IMR-90 (cell line): ENCODE measurements at regions of chr11 and their contacts with region 1.

Region 1: GRCh38 chr11:58394195-58394594 is 12.5 kb downstream of the OR5B3 start:
- DNase-seq: peak; percentile 82
- ATAC-seq: peak; percentile 30
- H3K4me3 ChIP-seq: no peak overlapping the region
- H3K27ac ChIP-seq: no peak overlapping the region; the same call in 1 of the 2 replicates
- H3K4me1 ChIP-seq: peaks cover 13% of the 10 kb centered on the region; the same call in 1 of the 2 replicates
- H3K27me3 ChIP-seq: no peaks in the 10 kb centered on the region
- CTCF ChIP-seq: no peak
- POLR2A ChIP-seq: no peak
- RAD21 ChIP-seq: no peak

Region 2: DNA sequence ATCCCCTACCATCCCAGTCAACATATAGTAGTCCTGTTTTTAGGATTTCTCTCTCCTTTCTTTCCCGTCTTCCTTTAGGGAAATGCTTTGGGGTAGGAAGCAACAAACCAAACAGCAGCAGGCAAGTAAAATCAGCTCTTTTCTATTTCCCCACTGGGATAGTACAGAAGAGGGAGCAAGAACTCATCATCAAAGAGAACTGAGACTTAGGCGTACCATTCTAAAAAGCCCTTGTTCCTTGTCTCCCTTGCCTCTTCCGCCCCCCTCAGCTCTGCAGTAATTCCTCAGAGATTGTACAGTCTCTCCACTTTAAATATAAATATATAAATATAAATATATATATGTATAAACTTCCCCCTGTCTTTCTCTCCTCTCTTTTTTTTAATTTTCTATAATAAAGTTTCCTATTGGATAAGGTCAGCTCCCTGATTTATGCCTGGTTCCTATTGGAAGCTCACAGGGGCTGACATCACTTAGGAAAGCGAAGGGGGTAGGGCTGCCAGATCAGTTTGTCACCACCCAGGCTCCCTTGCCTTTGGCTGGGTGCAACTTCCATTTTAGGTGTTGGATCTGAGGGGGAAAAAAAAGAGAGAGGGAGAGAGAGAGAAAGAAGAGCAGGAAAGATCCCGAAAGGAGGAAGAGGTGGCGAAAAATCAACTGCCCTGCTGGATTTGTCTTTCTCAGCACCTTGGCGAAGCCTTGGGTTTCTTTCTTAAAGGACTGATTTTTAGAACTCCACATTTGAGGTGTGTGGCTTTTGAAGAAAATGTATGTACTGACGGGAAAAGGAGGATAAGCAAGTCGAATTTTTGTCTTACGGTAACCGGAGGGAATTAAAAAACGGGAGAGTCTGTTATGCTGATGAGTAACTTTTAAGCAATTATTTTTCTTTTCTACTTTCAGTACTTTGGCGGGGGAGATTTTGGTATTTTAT is 632.6 kb before region 1 on chr11 and contains the start of gene CTNND1:
- CTCF ChIA-PET with region 1: no interaction called
- POLR2A ChIA-PET with region 1: no interaction called
- dilution Hi-C with region 1: no loop called
- in situ Hi-C with region 1: no loop called
- intact Hi-C with region 1: loop called (anchors 5 kb)
- DNase-seq: peak; percentile 98
- ATAC-seq: peak; percentile 96
- H3K4me3 ChIP-seq: peak within 1 kb of the TSS; percentile 99
- H3K27ac ChIP-seq: peak within 1 kb of the TSS; percentile 100
- H3K4me1 ChIP-seq: peaks cover 8% of the 10 kb centered on the region
- H3K27me3 ChIP-seq: no peaks in the 10 kb centered on the region
- CTCF ChIP-seq: no peak
- POLR2A ChIP-seq: peak; percentile 84; the same call in 1 of the 2 replicates
- RAD21 ChIP-seq: no peak
- total RNA-seq, gene CTNND1: 193 and 229 TPM in 2 replicates

Region 3: DNA sequence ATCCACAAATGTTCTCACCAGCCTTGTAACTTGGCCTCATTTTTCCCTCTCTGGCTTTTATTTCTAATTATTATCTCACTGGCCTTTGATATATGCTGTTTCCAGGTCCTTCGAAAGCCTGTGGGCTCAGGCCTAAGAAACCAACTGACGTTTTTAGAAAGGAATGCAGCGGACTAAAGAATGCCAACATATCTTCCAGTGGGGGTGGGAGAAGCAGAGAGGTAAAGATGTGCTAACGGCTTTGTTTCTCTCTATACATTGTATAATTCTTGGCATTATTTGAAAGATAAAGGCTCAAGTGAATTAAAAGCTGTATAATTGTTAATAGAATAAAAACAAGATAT is 335.2 kb before region 1 on chr11:
- CTCF ChIA-PET with region 1: no interaction called
- POLR2A ChIA-PET with region 1: no interaction called
- dilution Hi-C with region 1: no loop called
- in situ Hi-C with region 1: no loop called
- intact Hi-C with region 1: loop called (anchors 10 kb)
- DNase-seq: peak; percentile 92
- ATAC-seq: peak; percentile 81
- H3K4me3 ChIP-seq: no peak overlapping the region
- H3K27ac ChIP-seq: peak overlapping the region; percentile 99
- H3K4me1 ChIP-seq: peaks cover 32% of the 10 kb centered on the region
- H3K27me3 ChIP-seq: no peaks in the 10 kb centered on the region
- CTCF ChIP-seq: no peak
- POLR2A ChIP-seq: no peak
- RAD21 ChIP-seq: peak; percentile 5; the same call in 1 of the 2 replicates

Region 4: DNA sequence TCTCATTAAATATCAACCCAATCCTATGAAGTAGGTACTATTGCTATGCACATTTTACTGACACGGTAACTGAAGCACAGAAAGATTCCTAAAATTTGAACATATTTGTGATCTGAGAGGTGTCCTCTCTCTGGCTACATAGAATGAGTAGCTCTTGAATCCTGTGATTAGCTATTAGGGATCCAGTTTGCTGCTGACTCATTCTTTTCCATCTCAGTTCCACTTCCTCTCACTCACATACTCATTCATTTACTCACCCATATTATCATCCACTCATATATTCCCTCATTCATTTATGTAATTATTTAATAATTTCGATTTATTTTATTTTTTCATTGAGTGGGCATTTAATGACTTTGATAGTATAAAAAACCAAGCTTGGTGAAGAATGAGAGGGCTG is 78.1 kb before region 1 on chr11:
- CTCF ChIA-PET with region 1: no interaction called
- POLR2A ChIA-PET with region 1: no interaction called
- dilution Hi-C with region 1: no loop called
- in situ Hi-C with region 1: no loop called
- intact Hi-C with region 1: loop called (anchors 5 kb)
- DNase-seq: peak; percentile 80
- ATAC-seq: peak; percentile 43
- H3K4me3 ChIP-seq: no peak overlapping the region
- H3K27ac ChIP-seq: peak overlapping the region; percentile 98
- H3K4me1 ChIP-seq: peaks cover 13% of the 10 kb centered on the region
- H3K27me3 ChIP-seq: no peaks in the 10 kb centered on the region
- CTCF ChIP-seq: no peak
- POLR2A ChIP-seq: no peak
- RAD21 ChIP-seq: no peak

Region 5: GRCh38 chr11:58334708-58335107 is 59.5 kb before region 1 on chr11:
- CTCF ChIA-PET with region 1: no interaction called
- POLR2A ChIA-PET with region 1: no interaction called
- dilution Hi-C with region 1: no loop called
- in situ Hi-C with region 1: no loop called
- intact Hi-C with region 1: loop called (anchors 5 kb)
- DNase-seq: peak; percentile 89
- ATAC-seq: peak; percentile 83
- H3K4me3 ChIP-seq: no peak overlapping the region
- H3K27ac ChIP-seq: peak overlapping the region; percentile 53
- H3K4me1 ChIP-seq: peaks cover 5% of the 10 kb centered on the region; the same call in 1 of the 2 replicates
- H3K27me3 ChIP-seq: no peaks in the 10 kb centered on the region
- CTCF ChIP-seq: no peak
- POLR2A ChIP-seq: no peak
- RAD21 ChIP-seq: no peak

Region 6: DNA sequence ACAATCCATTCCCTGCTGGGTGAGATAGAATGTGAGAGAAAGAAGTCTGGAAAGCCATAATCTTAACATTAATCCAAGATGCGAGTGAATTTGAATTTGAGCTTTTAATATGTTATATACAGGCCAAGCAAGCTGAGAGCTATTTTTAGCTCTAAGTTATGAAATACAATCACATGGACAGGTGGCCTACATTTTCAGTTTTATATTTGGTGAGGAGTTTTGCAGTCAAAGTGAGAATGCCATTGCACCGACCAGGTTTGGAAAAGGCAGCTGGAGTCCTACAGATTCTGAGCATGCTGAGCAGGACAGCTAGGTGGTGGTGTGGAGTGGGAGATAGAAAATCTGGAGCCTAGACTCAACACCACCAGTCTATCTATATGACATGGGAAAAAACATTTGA is 101.7 kb after region 1 on chr11:
- CTCF ChIA-PET with region 1: no interaction called
- POLR2A ChIA-PET with region 1: no interaction called
- dilution Hi-C with region 1: no loop called
- in situ Hi-C with region 1: no loop called
- intact Hi-C with region 1: loop called (anchors 1 kb)
- DNase-seq: no peak
- ATAC-seq: no peak
- H3K4me3 ChIP-seq: no peak overlapping the region
- H3K27ac ChIP-seq: peak overlapping the region; percentile 43; the same call in 1 of the 2 replicates
- H3K4me1 ChIP-seq: peaks cover 14% of the 10 kb centered on the region; the same call in 1 of the 2 replicates
- H3K27me3 ChIP-seq: no peaks in the 10 kb centered on the region
- CTCF ChIP-seq: no peak
- POLR2A ChIP-seq: no peak
- RAD21 ChIP-seq: no peak

Region 7: GRCh38 chr11:58567889-58568512 is 173.8 kb after region 1 on chr11:
- CTCF ChIA-PET with region 1: no interaction called
- POLR2A ChIA-PET with region 1: no interaction called
- dilution Hi-C with region 1: no loop called
- in situ Hi-C with region 1: no loop called
- intact Hi-C with region 1: no loop called
- DNase-seq: peak; percentile 54
- ATAC-seq: peak; percentile 97
- H3K4me3 ChIP-seq: no peak overlapping the region
- H3K27ac ChIP-seq: no peak overlapping the region
- H3K4me1 ChIP-seq: peaks cover 2% of the 10 kb centered on the region
- H3K27me3 ChIP-seq: no peaks in the 10 kb centered on the region
- CTCF ChIP-seq: peak; percentile 80
- POLR2A ChIP-seq: no peak
- RAD21 ChIP-seq: peak; percentile 61